A673 (cell line): ENCODE measurements at regions of chr6 and their contacts with region 1.

Region 1: DNA sequence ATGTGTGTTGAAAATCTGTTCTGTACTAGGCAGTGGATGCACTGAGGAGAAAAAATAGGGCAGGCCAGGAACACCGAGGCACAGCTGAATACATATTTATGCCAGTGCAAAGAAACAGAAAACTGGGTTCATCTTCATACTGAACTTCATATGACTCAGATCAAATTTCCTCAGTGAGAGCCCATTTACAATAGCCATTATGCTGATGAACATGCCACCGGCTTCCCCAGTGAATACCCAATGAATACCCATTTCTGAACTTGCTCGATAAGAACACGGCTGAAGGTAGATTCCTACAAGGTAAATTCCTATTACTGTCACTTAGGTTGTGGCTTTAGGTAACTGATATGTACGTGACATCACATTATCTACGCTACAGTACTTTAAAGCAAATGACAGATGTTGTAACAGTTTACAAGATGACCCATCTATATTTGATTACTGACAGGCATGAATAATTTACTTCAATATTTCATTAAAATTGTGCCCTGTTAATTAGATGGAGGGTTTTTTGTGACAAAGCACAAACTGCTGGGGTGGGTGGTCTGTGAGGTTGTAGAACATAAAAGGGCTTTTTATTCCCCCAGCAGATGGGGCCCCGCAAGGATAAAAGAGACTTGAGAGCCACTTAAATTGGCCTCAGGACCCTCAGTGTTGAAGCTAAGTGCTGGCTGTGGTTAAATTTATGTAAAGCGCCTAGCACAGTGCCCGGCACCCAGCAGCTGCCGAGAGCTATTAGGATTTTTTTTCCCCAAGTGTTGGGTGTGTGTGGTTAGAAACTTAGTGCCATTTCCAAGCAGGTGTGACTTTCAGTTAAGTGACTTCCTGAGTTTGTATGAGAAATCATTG is 264.5 kb downstream of the CD83 start:
- DNase-seq: peak; percentile 54
- H3K4me3 ChIP-seq: peak overlapping the region; percentile 8
- H3K27ac ChIP-seq: peak overlapping the region; percentile 97
- H3K4me1 ChIP-seq: peaks cover 61% of the 10 kb centered on the region
- H3K27me3 ChIP-seq: no peaks in the 10 kb centered on the region
- CTCF ChIP-seq: no peak

Region 2: GRCh38 chr6:13908955-13909381 is 473.1 kb before region 1 on chr6:
- CTCF ChIA-PET with region 1: no interaction called
- POLR2A ChIA-PET with region 1: no interaction called
- intact Hi-C with region 1: loop called (anchors 2 kb)
- DNase-seq: peak; percentile 88
- H3K4me3 ChIP-seq: no peak overlapping the region
- H3K27ac ChIP-seq: peak overlapping the region; percentile 82
- H3K4me1 ChIP-seq: peaks cover 37% of the 10 kb centered on the region
- H3K27me3 ChIP-seq: no peaks in the 10 kb centered on the region
- CTCF ChIP-seq: peak; percentile 78

Region 3: DNA sequence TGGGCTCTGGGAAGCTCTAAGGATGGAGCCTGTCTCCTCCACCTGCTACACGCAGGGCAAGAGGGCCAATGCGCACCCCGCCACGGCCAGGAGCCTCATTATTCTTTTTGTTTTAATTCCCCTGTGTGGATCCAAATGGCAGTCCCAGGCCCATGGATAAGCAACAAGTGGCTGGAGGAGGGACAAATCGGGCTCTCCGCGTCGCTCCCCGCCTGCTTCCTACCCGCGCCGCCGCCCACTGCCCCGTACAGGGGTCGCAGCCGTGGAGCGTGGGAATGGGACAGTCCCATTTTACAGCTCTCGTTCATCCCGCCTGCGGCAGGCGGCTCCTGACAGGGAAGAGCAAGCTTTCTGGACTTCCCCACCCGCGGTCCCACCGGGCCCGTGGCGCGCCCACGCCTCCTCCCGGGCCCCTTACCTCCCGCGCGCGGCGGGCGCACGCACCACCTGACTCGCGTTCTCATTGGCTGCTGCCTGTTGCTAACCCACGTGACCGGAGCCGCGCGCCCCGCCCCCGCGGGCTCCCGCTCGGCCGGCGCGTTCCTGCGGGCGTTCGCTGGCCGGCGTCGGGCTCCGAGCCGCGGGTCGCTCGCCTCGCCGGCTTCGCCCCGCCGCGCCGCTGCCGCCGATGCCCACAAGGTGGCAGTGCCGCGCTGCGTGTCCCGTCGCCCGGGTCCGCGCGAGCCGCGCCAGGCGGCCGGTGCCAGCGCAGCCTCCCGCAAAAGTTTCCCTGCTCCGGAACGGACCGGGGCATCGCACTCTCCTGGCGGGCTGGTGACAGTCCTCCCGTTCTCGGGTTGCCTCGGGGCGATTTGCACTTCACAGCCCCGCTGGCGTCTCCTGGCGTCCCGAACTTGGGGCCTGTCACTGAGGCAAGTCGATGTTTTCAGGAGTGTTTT is 171.1 kb before region 1 on chr6:
- CTCF ChIA-PET with region 1: no interaction called
- POLR2A ChIA-PET with region 1: no interaction called
- intact Hi-C with region 1: loop called (anchors 1 kb)
- DNase-seq: peak; percentile 96
- H3K4me3 ChIP-seq: peak overlapping the region; percentile 54
- H3K27ac ChIP-seq: peak overlapping the region; percentile 91
- H3K4me1 ChIP-seq: peaks cover 38% of the 10 kb centered on the region
- H3K27me3 ChIP-seq: no peaks in the 10 kb centered on the region
- CTCF ChIP-seq: peak; percentile 47; the same call in 1 of the 2 replicates

Region 4: GRCh38 chr6:14799928-14800327 is 417.9 kb after region 1 on chr6:
- CTCF ChIA-PET with region 1: no interaction called
- POLR2A ChIA-PET with region 1: no interaction called
- intact Hi-C with region 1: loop called (anchors 5 kb)
- DNase-seq: peak; percentile 89
- H3K4me3 ChIP-seq: no peak overlapping the region
- H3K27ac ChIP-seq: peak overlapping the region; percentile 91
- H3K4me1 ChIP-seq: peaks cover 34% of the 10 kb centered on the region
- H3K27me3 ChIP-seq: no peaks in the 10 kb centered on the region
- CTCF ChIP-seq: no peak

Region 5: DNA sequence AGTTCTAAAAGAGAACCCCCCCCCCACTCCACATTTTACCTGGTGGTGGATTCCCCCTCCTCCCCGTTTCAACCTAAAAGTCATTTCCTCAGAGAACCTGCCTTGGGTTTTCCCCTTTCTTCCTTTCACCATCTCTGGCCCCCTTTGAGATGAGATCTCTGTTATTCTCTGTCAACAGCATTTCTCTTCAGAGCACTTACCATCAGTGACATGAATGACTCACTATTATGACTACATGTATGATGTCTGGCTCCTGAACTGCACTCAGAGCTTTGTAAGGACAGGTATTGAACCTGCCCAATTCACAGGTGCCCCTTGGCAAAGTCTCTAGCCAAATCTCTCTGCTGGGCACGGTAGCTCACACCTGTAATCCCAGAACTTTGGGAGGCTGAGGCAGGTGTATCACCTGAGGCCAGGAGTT is 802.4 kb after region 1 on chr6:
- CTCF ChIA-PET with region 1: no interaction called
- POLR2A ChIA-PET with region 1: no interaction called
- intact Hi-C with region 1: loop called (anchors 2 kb)
- DNase-seq: peak; percentile 15
- H3K4me3 ChIP-seq: no peak overlapping the region
- H3K27ac ChIP-seq: peak overlapping the region; percentile 65
- H3K4me1 ChIP-seq: peaks cover 7% of the 10 kb centered on the region
- H3K27me3 ChIP-seq: no peaks in the 10 kb centered on the region
- CTCF ChIP-seq: no peak

Region 6: DNA sequence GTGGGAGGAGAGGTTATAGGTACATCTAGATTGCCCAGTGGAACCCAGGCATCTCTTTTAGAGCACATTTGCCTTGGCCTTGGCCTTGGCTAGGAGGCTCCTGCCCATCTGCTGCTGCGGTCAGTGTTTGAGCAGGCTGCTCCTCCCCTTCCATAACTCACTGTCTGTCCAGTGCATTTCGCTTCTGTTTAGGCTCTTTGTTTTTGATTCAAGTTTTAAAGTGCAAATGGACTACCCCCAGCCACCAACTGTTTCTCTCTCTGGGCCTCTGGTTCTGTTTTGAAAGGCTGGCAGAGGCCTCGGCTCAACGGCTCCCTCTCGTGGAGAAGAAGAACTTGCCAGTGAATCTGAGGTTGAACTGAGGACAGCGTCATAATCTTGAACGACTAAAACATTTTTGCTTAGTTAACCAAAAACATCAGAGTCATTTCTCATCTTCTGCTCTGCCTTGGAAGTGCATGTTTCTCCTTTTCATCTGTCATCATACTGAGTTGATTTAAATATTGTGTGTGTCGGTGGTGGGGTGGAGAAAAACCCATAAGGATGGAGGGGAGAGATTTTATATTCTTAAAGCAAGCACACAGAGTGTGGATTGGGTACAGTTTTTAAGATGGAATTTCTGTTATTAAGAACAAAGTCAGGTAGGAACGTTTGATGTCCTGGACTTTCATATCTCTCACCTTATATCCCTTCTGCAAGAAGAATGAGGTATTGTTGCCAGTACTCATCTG is 1109.4 kb after region 1 on chr6:
- CTCF ChIA-PET with region 1: no interaction called
- POLR2A ChIA-PET with region 1: no interaction called
- intact Hi-C with region 1: loop called (anchors 10 kb)
- DNase-seq: peak; percentile 82
- H3K4me3 ChIP-seq: no peak overlapping the region
- H3K27ac ChIP-seq: no peak overlapping the region
- H3K4me1 ChIP-seq: peaks cover 39% of the 10 kb centered on the region
- H3K27me3 ChIP-seq: no peaks in the 10 kb centered on the region
- CTCF ChIP-seq: peak; percentile 96